ENCODE measurements at regions of chr4 and their contacts with region 1.

Region 1: DNA sequence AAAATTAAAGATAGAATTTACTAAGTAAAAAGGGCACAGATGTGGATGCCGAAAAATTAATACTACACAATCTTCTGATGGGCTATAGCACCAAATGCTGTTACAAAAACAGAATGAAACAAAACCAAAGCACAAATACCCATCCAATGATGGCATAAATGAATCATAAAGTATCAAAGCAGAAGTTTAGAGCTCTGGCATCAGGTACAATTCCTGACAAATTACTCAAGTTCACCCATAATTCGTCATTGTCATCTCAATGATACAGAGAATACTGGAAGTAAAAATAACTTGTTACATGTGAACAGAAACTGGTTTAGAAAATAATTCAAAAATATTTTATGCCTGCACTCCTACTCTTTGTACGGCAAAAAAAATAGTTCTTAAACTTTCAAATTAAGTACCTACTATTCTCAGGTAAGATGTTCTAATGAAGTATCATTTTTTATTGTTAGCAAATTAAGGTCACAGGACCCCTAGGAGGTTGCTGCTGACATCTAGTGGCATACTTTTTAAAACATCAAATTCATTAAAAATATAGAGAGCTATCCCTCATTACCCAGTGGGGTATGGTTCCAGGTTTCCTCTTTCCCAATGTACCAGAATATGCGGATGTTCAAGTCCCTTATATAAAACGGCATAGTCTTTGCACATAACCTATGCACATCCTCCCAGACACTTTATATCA is 126.1 kb downstream of the INPP4B start:
- DNase-seq: no peak
- H3K4me3 ChIP-seq: no peak overlapping the region
- H3K27ac ChIP-seq: no peak overlapping the region
- H3K4me1 ChIP-seq: no peaks in the 10 kb centered on the region
- H3K27me3 ChIP-seq: no peaks in the 10 kb centered on the region
- CTCF ChIP-seq: peak; percentile 42 to 64 (median 50)
- POLR2A ChIP-seq: no peak

Region 2: DNA sequence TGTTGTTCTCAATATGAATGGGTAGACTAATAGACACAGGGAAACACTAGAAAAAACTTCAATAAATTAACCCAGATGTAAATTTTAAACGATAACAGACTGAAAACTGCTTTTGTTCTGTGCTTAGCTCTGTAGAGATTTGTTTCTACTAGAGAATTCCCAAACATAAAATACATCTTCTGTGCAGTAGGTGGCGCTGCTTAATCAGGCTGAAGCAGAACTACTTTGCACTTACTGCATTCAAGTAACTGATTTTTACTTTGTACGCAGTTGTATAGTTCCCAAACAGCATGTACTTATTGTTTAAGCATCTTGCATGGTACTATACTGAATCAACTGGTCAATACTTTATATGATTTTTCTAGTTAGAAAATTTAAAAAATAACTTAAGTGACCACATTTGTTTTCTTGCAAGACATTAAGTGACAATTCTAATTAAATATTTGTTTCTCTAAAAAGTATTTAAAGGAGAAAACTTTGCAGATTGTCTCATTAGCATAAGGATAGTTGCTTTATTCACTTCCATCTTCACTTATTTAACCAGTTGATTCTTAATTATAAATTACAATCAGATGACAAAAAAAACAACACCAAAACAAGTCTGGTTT is 593.0 kb before region 1 on chr4:
- intact Hi-C with region 1: loop called in 1 of 2 experiments (anchors 10 kb)
- DNase-seq: peak; percentile 50 to 83 (median 67)
- H3K4me3 ChIP-seq: no peak overlapping the region
- H3K27ac ChIP-seq: no peak overlapping the region
- H3K4me1 ChIP-seq: no peaks in the 10 kb centered on the region
- H3K27me3 ChIP-seq: no peaks in the 10 kb centered on the region
- CTCF ChIP-seq: peak; percentile 72 to 93 (median 82)
- POLR2A ChIP-seq: no peak

Region 3: DNA sequence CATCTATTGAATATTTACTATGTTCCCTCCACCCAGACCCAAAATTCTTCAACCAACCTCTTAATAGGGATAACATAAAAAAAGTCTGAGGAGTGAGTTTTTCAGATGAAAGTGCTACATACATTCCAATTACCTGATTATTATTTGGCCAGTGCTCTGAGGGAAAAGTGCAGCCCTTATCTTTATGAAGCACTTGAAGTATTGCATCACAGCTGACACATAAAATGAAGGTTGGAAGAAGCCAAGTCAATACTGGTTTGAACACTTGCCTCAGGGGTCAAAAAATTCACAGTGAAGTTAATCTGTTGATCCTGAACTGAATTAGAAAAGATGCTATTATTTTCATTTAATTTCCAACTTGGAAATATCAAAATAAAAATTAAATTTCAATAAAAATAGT is 372.8 kb before region 1 on chr4:
- intact Hi-C with region 1: loop called (anchors 10 kb)
- DNase-seq: no peak
- H3K4me3 ChIP-seq: no peak overlapping the region
- H3K27ac ChIP-seq: no peak overlapping the region
- H3K4me1 ChIP-seq: peaks cover 0 to 16% of the 10 kb centered on the region in 2 donors
- H3K27me3 ChIP-seq: no peaks in the 10 kb centered on the region
- CTCF ChIP-seq: no peak
- POLR2A ChIP-seq: no peak

Region 4: GRCh38 chr4:142353149-142353738 is 366.8 kb before region 1 on chr4:
- intact Hi-C with region 1: loop called (anchors 10 kb)
- DNase-seq: peak in 5 of 7 donors; percentile 20 to 47 (median 33)
- H3K4me3 ChIP-seq: no peak overlapping the region
- H3K27ac ChIP-seq: peak overlapping the region in 1 of 5 donors; percentile 5
- H3K4me1 ChIP-seq: peaks cover 18 to 44% of the 10 kb centered on the region in 2 donors
- H3K27me3 ChIP-seq: no peaks in the 10 kb centered on the region
- CTCF ChIP-seq: peak; percentile 71 to 94 (median 86)
- POLR2A ChIP-seq: no peak

Region 5: DNA sequence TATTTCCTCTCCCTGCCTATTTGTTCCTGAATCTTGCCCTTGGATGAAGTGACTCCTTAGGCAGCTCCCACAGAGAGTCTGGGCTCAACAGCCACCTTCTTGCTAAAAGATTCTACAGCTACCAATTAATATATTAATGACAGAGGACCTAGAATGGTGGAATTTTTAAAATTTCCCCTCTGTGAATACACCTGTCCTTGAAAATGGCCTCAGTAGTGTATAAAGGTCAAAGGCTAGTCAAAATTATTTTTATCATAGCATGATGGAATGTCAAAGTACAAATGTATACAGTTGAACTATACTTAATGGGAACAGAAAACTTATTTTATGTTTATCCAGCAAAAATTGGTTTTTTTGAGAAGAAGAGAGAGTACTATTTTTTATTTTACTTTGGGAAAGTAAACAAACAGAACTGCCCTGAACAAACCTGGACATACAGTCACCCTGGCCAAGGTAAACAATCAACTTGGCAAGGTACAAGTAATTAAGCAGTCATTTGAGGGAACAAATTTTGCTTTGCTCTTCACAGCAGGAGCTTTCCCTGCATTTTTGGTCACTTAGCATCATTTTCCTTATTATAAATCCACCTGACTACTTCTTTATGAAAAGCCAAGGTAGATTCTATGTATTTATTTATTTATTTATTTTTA is 124.7 kb before region 1 on chr4:
- intact Hi-C with region 1: no loop called
- DNase-seq: no peak
- H3K4me3 ChIP-seq: no peak overlapping the region
- H3K27ac ChIP-seq: no peak overlapping the region
- H3K4me1 ChIP-seq: no peaks in the 10 kb centered on the region
- H3K27me3 ChIP-seq: no peaks in the 10 kb centered on the region
- CTCF ChIP-seq: no peak
- POLR2A ChIP-seq: no peak

Region 6: DNA sequence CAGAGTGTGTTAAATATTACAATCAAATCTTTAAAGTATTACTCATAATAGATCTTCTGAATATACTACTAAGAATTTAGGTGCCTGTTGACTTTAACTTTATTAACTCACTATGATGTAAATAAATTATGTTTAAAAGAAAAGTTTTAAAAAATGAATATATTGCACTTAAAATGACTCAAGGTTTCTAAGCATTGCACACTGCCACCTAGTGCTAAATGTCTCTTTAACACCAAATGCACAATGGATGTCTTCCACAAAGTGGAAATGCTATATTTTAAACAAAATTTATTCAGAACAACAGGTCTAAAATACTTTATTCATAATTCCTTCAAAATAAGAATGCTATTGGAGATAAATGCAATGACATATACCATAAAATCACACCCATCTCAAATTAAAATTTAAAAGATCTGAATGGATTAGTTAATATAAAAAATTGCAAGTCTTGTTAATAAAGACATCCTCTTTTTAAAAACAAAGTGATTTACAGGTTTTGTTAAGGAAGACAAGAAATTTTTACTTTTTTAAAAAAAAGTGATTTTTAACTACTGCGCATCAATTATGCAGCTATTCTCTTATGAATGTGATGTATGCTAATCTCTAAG is 120.6 kb after region 1 on chr4:
- intact Hi-C with region 1: no loop called
- DNase-seq: no peak
- H3K4me3 ChIP-seq: no peak overlapping the region
- H3K27ac ChIP-seq: no peak overlapping the region
- H3K4me1 ChIP-seq: peaks cover 5 to 10% of the 10 kb centered on the region in 2 donors
- H3K27me3 ChIP-seq: no peaks in the 10 kb centered on the region
- CTCF ChIP-seq: peak; percentile 38 to 70 (median 46)
- POLR2A ChIP-seq: no peak

Measured in adrenal gland (tissue), 19 donors.